ENCODE measurements at regions of chr5 and their contacts with region 1.

Region 1: GRCh38 chr5:149551200-149552037 is at the start of gene CSNK1A1:
- DNase-seq: peak; percentile 100
- H3K4me3 Mint-ChIP-seq: peak within 1 kb of the TSS; percentile 89
- H3K27ac Mint-ChIP-seq: peak within 1 kb of the TSS; percentile 99
- H3K4me1 Mint-ChIP-seq: peaks cover 10% of the 10 kb centered on the region
- H3K27me3 Mint-ChIP-seq: no peaks in the 10 kb centered on the region
- CTCF ChIP-seq: peak; percentile 97
- total RNA-seq, gene CSNK1A1: 666 and 744 TPM in 2 replicates

Region 2: DNA sequence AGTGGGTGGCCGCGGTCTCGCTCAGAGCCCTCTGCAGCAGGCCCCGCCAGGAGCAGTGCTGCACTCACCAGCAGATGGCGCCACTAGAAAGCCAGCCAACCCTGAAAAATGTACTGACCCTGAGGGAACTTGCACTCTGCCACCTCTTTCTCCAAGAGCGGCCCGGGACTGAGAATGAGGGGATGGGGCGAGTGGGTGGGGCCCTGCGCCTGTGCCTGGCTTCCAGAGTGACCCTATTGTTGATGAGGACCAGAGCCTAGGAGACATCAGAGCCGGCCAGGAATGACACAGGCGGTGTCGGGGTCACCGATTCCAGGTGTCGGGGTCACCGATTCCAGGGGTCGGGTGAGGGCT is 169.5 kb before region 1 on chr5:
- CTCF ChIA-PET with region 1: interaction called, 16 read pairs
- POLR2A ChIA-PET with region 1: no interaction called
- intact Hi-C with region 1: no loop called
- DNase-seq: peak; percentile 78
- H3K4me3 Mint-ChIP-seq: no peak overlapping the region
- H3K27ac Mint-ChIP-seq: no peak overlapping the region
- H3K4me1 Mint-ChIP-seq: no peaks in the 10 kb centered on the region
- H3K27me3 Mint-ChIP-seq: no peaks in the 10 kb centered on the region
- CTCF ChIP-seq: peak; percentile 97

Region 3: GRCh38 chr5:149471406-149472183 is 79.8 kb before region 1 on chr5:
- CTCF ChIA-PET with region 1: interaction called, 8 read pairs
- POLR2A ChIA-PET with region 1: interaction called, 60 read pairs
- intact Hi-C with region 1: no loop called
- DNase-seq: peak; percentile 63
- H3K4me3 Mint-ChIP-seq: no peak overlapping the region
- H3K27ac Mint-ChIP-seq: peak overlapping the region; percentile 64
- H3K4me1 Mint-ChIP-seq: peaks cover 28% of the 10 kb centered on the region
- H3K27me3 Mint-ChIP-seq: no peaks in the 10 kb centered on the region
- CTCF ChIP-seq: no peak

Region 4: DNA sequence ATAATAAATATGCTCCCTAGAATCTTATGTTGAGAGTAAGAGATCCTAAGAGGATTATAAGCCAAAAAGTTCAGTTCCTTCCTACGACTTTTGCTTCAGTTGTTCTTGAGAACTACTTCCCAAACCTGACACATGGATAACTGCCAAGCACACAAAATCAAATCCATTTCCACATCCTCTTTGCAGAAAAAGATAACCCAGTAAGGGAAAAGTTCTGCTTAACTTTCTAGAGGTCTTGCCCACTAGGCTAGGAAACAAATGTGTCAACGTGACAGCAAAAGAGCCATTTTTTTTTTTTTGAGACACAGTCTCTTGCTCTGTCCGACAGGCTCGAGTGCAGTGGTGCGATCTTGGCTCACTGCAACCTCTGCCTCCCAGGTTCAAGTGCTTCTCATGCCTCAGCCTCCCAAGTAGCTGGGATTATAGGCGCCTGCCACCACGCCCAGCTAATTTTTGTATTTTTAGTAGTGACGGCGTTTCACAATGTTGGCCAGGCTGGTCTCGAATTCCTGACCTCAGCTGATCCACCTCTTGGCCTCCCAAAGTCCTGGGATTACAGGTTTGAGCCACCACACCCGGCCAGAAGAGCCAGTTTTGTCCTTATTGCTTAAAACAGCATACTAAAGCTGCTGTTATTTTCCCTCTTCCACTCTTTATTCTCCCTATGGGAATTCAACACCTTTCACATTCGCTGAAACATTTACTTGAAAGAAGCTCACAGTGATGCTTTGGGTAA is 24.4 kb before region 1 on chr5:
- CTCF ChIA-PET with region 1: interaction called, 14 read pairs
- POLR2A ChIA-PET with region 1: interaction called, 379 read pairs
- intact Hi-C with region 1: no loop called
- DNase-seq: no peak
- H3K4me3 Mint-ChIP-seq: no peak overlapping the region
- H3K27ac Mint-ChIP-seq: peak overlapping the region; percentile 46
- H3K4me1 Mint-ChIP-seq: peaks cover 62% of the 10 kb centered on the region
- H3K27me3 Mint-ChIP-seq: no peaks in the 10 kb centered on the region
- CTCF ChIP-seq: no peak

Region 5: DNA sequence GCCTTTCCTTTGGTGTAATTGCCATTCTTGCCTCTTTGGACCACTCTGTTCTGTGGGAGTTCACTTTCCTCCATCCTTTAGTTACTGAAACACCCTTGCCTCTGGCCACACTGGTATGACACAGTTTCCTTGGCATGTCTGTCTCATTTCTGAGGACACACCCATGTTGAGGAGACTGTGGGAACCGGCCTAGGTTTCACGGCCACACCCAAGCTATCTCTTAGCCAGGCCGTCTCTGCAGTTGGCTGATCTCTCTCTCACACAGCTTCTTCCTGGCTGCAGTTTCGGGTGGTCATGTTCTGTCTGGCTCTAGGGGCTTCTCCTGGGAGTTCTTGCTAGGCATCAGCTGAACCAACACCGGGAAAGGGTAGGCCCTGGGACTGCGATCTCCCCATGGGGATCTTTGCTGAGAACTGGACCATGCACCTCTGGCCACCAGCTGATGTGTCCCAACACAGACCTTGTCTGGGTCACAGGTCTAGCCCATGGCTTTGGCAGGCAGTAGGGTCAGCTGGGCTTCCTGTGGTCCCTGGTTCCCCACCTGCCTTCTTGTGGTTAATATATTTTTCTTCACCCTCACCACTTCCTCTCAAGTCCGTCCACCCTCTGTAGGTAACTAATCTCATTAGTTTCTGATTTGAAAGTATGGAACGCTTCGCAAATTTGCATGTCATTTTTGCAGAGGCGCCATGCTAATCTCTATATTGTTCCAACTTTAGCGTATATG is 54.7 kb after region 1 on chr5:
- CTCF ChIA-PET with region 1: interaction called, 15 read pairs
- POLR2A ChIA-PET with region 1: interaction called, 27 read pairs
- intact Hi-C with region 1: no loop called
- DNase-seq: peak; percentile 99
- H3K4me3 Mint-ChIP-seq: no peak overlapping the region
- H3K27ac Mint-ChIP-seq: peak overlapping the region; percentile 91
- H3K4me1 Mint-ChIP-seq: peaks cover 48% of the 10 kb centered on the region
- H3K27me3 Mint-ChIP-seq: no peaks in the 10 kb centered on the region
- CTCF ChIP-seq: no peak